PC-3 (cell line): ENCODE measurements at regions of chr5 and their contacts with region 1.

Region 1: DNA sequence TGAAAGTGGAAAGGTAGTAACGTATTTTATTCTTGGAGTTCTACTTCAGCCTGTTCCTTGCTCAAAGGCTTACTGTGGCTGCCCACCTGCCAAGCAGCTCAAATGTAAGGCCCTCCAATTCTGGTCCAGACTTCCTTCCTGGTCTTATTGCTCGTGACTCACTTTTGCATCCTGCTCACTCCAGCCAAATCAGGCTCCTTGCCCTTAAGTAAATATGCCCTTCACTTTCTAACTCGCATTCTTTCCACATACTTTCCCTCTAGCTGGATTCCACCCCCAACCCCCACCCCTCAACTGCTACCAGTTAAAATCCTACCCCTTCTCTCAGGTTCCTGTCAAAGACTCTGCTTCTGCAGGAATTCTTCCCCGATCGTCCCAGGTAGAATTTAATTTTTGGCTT is 96.6 kb downstream of the GALNT10 start:
- DNase-seq: peak; percentile 89
- ATAC-seq: peak; percentile 72
- H3K4me3 ChIP-seq: peak overlapping the region; percentile 62
- H3K27ac ChIP-seq: peak overlapping the region; percentile 80
- H3K4me1 ChIP-seq: peaks cover 54% of the 10 kb centered on the region
- H3K27me3 ChIP-seq: no peaks in the 10 kb centered on the region
- CTCF ChIP-seq: no peak

Region 2: DNA sequence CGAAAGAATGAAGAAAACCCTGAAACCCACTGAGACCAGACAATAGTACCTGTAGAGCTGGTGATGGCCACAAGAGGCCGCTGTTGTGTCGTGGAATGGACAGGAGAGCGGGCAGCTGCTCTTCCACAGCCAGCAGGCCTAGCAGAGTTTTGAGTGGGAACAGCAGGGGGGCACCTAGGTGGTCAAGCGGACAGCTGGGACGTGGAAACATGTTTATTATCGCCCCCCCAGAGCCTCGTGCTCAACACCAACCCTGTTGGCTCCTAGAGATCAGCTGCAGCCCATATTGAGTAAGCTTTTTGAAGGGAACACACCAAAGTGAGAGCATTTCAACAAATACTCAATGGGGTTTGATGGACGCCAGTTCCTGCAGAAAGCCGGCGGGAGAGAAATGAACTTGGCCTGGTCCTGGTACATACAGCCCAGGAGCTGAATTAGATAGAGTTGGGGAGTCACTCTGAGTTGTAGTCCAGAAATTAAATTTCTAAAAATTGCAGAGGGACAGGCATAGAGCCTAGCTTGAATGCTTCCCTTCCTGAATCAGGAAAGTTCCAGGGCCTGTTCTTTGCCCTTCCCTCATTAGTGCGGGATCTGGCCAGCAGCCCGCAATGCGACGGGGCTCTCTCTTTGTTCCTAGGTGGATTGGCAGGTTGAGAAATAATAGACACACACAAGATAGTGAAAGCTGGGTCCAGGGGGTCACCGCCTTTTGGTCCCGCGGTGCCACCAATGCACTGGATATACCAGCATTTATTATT is 214.5 kb before region 1 on chr5:
- CTCF ChIA-PET with region 1: no interaction called
- POLR2A ChIA-PET with region 1: no interaction called
- intact Hi-C with region 1: loop called (anchors 10 kb)
- DNase-seq: peak; percentile 80
- ATAC-seq: peak; percentile 97
- H3K4me3 ChIP-seq: peak overlapping the region; percentile 56
- H3K27ac ChIP-seq: no peak overlapping the region
- H3K4me1 ChIP-seq: peaks cover 3% of the 10 kb centered on the region
- H3K27me3 ChIP-seq: no peaks in the 10 kb centered on the region
- CTCF ChIP-seq: peak; percentile 90

Region 3: DNA sequence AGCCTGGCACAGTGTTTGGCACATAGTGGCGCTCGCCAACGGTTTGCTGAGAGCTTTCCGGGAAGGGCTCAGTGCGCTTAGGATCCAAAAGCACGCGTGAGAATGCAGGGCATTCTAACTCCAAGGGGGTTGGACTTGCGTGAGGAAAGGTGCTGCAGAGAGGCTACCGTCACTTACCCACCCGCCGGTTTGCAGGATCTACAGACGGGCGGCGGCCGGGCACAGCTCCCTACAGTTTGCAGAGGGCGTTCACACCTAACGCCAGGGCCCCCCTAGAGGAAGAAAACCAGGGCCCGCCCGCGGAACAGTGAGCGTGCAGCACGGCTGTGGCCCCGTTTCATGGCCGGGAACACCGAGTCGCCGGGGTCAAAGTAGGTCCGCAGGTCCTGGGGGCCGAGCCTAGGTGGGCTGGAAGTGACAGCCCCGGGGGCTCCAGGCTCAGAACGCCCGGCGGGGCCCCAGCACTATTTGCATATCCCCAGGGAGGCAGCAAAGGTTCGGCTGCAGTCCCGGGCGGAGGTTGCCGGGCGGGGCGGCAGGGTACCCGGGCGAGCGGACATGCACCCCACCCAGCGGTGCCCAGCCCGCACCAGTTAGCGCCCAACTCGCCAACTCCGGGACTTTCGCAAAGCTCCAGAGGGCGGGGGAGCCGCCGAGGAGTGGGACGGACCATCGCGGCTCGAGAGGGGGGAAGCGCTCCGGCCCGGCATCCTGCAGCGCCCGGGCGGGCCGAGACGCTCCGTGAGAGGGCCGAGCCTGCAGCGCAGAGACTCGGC is 97.1 kb before region 1 on chr5:
- CTCF ChIA-PET with region 1: no interaction called
- POLR2A ChIA-PET with region 1: interaction called, 3 read pairs
- intact Hi-C with region 1: loop called (anchors 5 kb)
- DNase-seq: peak; percentile 71
- ATAC-seq: peak; percentile 68
- H3K4me3 ChIP-seq: peak overlapping the region; percentile 92
- H3K27ac ChIP-seq: peak overlapping the region; percentile 44
- H3K4me1 ChIP-seq: peaks cover 41% of the 10 kb centered on the region
- H3K27me3 ChIP-seq: no peaks in the 10 kb centered on the region
- CTCF ChIP-seq: peak; percentile 58

Region 4: DNA sequence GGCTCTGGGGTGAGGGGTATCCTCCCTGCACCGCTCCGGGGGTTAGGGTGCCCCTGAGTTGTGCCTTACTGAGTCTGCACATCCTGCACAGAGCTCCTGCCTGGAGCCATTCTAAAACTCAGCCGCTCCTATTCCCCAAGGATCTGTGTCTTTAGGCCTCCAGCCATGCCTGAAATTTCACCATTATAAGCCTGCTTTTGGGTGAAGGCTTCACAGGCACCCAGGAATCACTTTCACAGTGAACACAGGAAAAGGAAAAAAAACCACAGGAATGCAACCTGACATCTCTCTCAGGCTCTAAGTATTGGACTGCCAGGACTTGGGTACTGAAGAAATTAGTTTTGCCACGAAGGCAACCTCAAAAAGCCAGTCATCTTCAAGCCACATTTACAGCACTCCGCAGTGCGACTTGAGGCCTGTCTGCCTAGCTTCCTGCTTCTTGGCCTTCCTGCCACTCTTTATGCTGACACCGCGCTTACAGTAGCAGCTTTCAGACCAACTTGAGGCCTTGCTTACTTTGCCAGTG is 65.7 kb before region 1 on chr5:
- CTCF ChIA-PET with region 1: no interaction called
- POLR2A ChIA-PET with region 1: no interaction called
- intact Hi-C with region 1: loop called (anchors 5 kb)
- DNase-seq: peak; percentile 84
- ATAC-seq: peak; percentile 80
- H3K4me3 ChIP-seq: peak overlapping the region; percentile 2; the same call in 1 of the 2 replicates
- H3K27ac ChIP-seq: peak overlapping the region; percentile 71
- H3K4me1 ChIP-seq: peaks cover 36% of the 10 kb centered on the region
- H3K27me3 ChIP-seq: no peaks in the 10 kb centered on the region
- CTCF ChIP-seq: no peak

Region 5: DNA sequence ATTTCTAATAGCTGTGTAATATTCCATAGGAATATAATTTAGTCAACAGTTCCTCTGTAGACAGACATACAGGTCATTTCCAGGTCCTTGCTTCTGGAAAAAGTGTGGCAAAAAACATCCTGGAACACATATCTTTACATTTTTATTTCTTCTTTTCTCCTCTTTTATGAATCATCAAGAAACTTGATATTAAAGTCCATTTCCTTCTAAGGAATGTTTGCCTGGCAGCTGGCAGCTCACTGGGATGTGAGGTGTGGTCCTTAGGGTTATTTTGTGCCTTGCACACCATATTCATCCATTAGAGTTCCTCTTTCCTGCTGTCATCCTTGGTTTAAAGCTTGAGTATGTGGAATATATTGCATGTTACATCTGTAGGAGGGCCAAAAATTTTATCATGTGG is 25.4 kb after region 1 on chr5:
- CTCF ChIA-PET with region 1: no interaction called
- POLR2A ChIA-PET with region 1: interaction called, 8 read pairs
- intact Hi-C with region 1: loop called (anchors 2 kb)
- DNase-seq: peak; percentile 61
- ATAC-seq: peak; percentile 75
- H3K4me3 ChIP-seq: no peak overlapping the region
- H3K27ac ChIP-seq: no peak overlapping the region
- H3K4me1 ChIP-seq: peaks cover 35% of the 10 kb centered on the region
- H3K27me3 ChIP-seq: no peaks in the 10 kb centered on the region
- CTCF ChIP-seq: no peak

Region 6: DNA sequence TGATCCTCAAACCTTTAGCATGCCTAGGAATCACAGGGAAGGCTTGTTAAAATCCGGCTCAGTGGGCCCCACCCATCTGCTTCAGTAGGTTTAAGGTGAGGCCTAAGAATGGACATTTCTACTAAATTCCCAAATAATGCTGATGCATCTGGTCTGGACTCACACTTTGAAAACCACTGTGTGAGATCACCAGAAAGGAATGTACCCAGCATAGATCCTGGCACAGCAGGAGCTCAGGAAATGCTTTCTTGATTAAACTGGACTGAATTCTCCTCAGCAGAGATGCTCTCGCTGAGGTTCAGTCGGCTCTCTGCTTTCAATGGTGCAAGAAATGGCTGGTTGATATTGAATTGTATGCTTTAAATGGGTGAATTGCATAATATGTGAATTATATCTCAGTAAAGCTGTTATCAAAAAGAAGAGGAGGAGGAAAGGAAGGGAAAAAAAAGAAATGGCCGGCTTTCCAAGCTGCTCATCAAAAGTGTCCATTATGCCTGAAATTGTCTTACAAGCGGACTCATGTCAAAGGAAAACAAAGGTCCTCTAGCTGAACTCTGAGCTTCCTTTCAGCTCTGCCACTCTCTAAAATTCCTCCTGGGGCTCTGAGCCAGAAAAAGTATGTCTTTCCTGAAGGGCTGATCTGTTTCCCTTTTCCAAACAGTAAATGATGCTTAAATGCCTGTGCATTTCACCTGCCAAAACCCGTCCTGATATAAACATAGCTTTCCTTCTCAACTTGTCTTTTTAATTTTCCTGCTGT is 81.1 kb after region 1 on chr5:
- CTCF ChIA-PET with region 1: no interaction called
- POLR2A ChIA-PET with region 1: no interaction called
- intact Hi-C with region 1: loop called (anchors 2 kb)
- DNase-seq: peak; percentile 95
- ATAC-seq: peak; percentile 88
- H3K4me3 ChIP-seq: peak overlapping the region; percentile 6; the same call in 1 of the 2 replicates
- H3K27ac ChIP-seq: peak overlapping the region; percentile 96
- H3K4me1 ChIP-seq: peaks cover 60% of the 10 kb centered on the region
- H3K27me3 ChIP-seq: no peaks in the 10 kb centered on the region
- CTCF ChIP-seq: no peak

Region 7: GRCh38 chr5:154534457-154535050 is 247.4 kb after region 1 on chr5:
- CTCF ChIA-PET with region 1: no interaction called
- POLR2A ChIA-PET with region 1: no interaction called
- intact Hi-C with region 1: no loop called
- DNase-seq: no peak
- ATAC-seq: no peak
- H3K4me3 ChIP-seq: no peak overlapping the region
- H3K27ac ChIP-seq: no peak overlapping the region
- H3K4me1 ChIP-seq: no peaks in the 10 kb centered on the region
- H3K27me3 ChIP-seq: peaks cover 25% of the 10 kb centered on the region
- CTCF ChIP-seq: no peak